AG04449 (cell line): ENCODE measurements at regions of chr7 and their contacts with region 1.

Region 1: DNA sequence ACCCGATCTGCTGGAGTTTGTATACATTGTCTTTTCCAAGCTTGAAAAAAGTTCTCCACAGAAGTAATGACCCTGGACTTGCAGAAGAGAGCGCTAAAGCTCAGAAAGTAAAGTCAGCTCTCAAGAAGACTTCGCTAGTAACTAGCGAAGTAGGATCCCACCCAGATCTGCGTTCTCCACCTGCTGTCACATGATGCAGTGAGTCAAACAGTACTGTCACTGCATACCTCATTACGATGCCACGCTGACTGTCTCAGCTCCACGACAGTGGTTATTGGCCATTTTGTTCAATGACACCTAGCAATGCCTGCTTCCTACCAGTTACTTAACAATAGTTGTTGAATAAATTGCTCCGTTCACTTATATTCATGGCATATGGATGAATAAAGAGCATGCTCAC is 29.7 kb upstream of the SEC61G start:
- DNase-seq: peak; percentile 57
- H3K4me3 ChIP-seq: no peak overlapping the region
- CTCF ChIP-seq: peak; percentile 63

Region 2: GRCh38 chr7:54637712-54638396 is 150.8 kb before region 1 on chr7:
- CTCF ChIA-PET with region 1: no interaction called
- POLR2A ChIA-PET with region 1: no interaction called
- DNase-seq: no peak
- H3K4me3 ChIP-seq: no peak overlapping the region
- CTCF ChIP-seq: no peak

Region 3: DNA sequence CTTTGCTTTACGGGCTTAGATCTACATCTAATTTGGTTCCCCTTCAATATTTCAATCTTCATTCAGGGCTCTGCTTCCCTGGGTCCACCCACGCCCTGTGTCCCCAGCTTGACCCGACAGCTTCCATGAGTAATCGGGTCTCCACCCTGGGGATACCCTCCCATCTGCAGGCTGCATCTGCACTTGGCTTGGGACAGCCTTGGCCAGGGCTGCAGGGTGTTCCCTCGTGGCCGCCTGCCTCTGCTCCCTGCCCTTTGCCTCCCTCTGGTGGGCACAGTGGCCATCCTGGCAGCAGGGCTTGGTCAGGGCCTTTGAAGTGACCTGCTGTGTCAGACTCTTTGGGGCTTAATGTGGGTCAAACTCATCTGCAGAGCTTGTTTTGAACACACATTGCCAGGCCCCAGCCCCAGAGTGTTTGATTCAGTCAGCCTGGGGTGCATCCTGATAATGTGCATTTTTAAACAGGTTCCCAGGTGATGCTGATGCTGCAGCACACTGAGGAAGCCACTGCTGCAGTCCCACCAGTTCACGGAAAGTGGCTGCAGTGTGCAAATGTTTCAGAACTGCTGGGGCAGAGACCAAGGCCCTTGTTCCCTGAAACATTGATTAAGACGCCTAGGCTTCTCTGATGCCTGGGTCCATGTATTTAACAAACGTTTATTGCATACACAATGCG is 51.0 kb after region 1 on chr7:
- CTCF ChIA-PET with region 1: interaction called, 14 read pairs
- POLR2A ChIA-PET with region 1: no interaction called
- DNase-seq: no peak
- H3K4me3 ChIP-seq: no peak overlapping the region
- CTCF ChIP-seq: peak; percentile 75

Region 4: DNA sequence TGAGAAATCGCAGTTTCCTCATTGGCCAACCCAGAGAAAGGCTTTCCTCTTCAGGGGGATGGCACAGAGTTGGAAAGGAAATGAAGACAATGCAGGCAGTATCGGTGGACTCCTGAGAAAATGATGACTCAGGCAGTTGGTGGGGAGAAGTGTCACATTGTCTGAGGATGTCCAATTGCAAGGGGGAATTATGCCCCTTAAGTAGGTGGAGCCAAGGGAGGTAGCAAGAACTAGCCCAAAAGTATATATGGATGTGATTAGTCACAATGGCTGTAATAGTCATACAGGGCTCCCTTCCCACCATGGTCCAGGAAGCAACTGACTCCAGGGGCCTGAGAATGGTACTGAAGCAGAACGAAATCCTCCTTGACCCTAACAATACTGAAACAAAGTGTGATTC is 171.9 kb after region 1 on chr7:
- CTCF ChIA-PET with region 1: no interaction called
- POLR2A ChIA-PET with region 1: no interaction called
- DNase-seq: no peak
- H3K4me3 ChIP-seq: no peak overlapping the region
- CTCF ChIP-seq: no peak

Region 5: DNA sequence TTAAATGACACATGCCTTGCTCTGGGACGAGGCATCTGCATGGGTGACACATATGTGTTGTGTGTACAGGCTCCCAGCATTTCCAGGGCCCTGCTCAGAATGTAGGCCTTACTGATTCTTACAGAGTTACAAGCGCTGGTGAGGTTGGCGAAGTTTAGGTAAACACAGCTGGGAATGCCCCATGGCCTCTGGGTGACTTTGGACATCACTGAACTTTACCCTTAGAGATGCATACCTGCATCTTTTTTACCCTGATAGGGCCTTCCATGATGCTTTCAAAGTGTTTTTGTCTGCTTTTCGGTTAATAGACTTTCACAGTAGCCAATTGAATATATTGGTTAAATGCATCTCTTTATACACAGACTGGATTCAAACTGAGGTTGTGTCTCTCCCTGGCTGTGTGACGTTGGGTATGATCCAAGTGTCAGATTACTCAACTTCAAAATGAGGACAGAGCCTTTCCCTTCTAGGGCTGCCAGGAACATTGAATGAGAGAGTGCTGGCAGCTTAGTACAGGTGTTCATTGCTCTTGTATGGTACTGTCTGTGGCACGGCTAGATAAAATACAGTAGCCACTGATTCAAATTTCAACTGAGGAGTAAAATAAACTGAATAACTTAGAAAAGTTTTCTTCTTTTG is 259.7 kb after region 1 on chr7:
- CTCF ChIA-PET with region 1: interaction called, 27 read pairs
- POLR2A ChIA-PET with region 1: no interaction called
- DNase-seq: no peak
- H3K4me3 ChIP-seq: no peak overlapping the region
- CTCF ChIP-seq: no peak

Region 6: DNA sequence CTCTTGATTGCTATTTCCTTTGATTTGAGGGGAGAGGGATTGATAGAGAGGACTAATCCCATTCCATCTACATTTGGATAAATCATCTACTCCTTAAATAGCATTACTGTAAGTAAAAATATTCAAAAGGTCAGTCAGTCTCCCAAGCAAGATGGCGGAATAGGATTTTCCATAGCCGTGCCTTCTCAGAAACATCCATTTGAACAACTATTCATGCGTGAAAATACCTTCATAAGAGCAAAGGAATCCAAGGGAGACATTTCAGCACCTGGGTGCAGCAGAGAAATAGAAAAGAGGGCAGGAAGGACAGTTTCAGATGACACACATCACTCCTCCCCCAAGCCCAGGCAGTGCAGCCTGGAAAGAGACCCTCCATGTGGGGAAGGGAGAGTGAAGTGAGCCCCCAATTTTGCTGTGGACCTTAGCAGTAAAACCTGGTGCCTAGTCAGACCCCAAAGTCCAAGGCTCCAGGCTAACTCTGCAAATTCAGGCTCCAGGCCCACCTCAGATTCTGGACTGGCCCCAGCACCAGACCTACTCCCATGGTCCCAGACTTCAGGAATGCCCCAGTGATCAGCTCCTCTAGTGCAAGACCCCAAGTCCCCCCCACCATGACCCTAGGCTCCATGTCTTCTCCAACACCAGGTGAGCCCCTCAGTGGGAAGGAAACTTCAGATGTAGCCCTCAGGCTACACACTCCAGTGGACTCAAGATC is 472.2 kb after region 1 on chr7:
- CTCF ChIA-PET with region 1: interaction called, 555 read pairs
- POLR2A ChIA-PET with region 1: interaction called, 6 read pairs
- DNase-seq: no peak
- H3K4me3 ChIP-seq: no peak overlapping the region
- CTCF ChIP-seq: no peak

Region 7: GRCh38 chr7:55271069-55271626 is 482.5 kb after region 1 on chr7:
- CTCF ChIA-PET with region 1: interaction called, 399 read pairs
- POLR2A ChIA-PET with region 1: no interaction called
- DNase-seq: no peak
- H3K4me3 ChIP-seq: no peak overlapping the region
- CTCF ChIP-seq: peak; percentile 56